ENCODE measurements at regions of chr6 and their contacts with region 1.

Region 1: GRCh38 chr6:2931970-2932748 is 29.1 kb upstream of the SERPINB9 start:
- DNase-seq: peak; percentile 88
- H3K4me3 Mint-ChIP-seq: no peak overlapping the region
- H3K27ac Mint-ChIP-seq: no peak overlapping the region
- H3K4me1 Mint-ChIP-seq: no peaks in the 10 kb centered on the region
- H3K27me3 Mint-ChIP-seq: no peaks in the 10 kb centered on the region
- CTCF ChIP-seq: peak; percentile 94

Region 2: GRCh38 chr6:2846873-2847224 is 85.3 kb before region 1 on chr6:
- CTCF ChIA-PET with region 1: interaction called, 112 read pairs
- POLR2A ChIA-PET with region 1: interaction called, 18 read pairs
- intact Hi-C with region 1: loop called (anchors 1 kb)
- DNase-seq: no peak
- H3K4me3 Mint-ChIP-seq: peak overlapping the region; percentile 54
- H3K27ac Mint-ChIP-seq: peak overlapping the region; percentile 71
- H3K4me1 Mint-ChIP-seq: peaks cover 19% of the 10 kb centered on the region
- H3K27me3 Mint-ChIP-seq: no peaks in the 10 kb centered on the region
- CTCF ChIP-seq: no peak

Region 3: GRCh38 chr6:2870056-2870674 is 62.0 kb before region 1 on chr6:
- CTCF ChIA-PET with region 1: interaction called, 16 read pairs
- POLR2A ChIA-PET with region 1: no interaction called
- intact Hi-C with region 1: no loop called
- DNase-seq: no peak
- H3K4me3 Mint-ChIP-seq: no peak overlapping the region
- H3K27ac Mint-ChIP-seq: no peak overlapping the region
- H3K4me1 Mint-ChIP-seq: peaks cover 7% of the 10 kb centered on the region
- H3K27me3 Mint-ChIP-seq: peaks cover 10% of the 10 kb centered on the region
- CTCF ChIP-seq: no peak

Region 4: DNA sequence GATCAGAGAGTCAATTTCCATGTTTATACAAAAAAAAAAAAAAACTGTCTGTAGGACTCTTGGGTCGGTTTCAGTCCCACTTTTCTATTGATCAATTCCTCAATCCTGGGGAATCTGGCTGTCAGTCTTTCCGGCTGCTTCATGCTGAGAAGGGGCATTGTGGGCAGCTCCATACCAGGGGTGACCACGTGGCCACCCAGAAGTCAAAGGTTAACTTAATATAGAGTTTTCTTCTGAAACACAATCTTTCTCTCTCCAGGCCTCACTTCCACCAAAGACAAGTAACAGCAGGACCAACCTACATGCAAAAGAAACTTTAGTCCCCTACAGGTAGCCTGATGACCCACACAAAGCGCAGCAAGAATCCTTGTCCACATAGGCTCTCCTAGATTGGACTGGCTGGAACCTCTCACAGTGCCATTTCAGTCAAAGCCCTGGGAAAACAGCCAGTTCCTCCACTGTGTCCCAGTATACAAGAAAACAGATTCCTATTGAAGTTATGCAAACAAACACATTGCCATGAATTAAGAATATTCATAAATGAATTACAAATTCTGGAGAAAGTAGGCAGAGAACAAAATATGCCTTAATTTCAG is 10.5 kb before region 1 on chr6:
- CTCF ChIA-PET with region 1: interaction called, 11 read pairs
- POLR2A ChIA-PET with region 1: no interaction called
- intact Hi-C with region 1: no loop called
- DNase-seq: no peak
- H3K4me3 Mint-ChIP-seq: no peak overlapping the region
- H3K27ac Mint-ChIP-seq: no peak overlapping the region
- H3K4me1 Mint-ChIP-seq: no peaks in the 10 kb centered on the region
- H3K27me3 Mint-ChIP-seq: no peaks in the 10 kb centered on the region
- CTCF ChIP-seq: no peak

Measured in MCF 10A (cell line).